ENCODE measurements at regions of chr6 and their contacts with region 1.

Region 1: DNA sequence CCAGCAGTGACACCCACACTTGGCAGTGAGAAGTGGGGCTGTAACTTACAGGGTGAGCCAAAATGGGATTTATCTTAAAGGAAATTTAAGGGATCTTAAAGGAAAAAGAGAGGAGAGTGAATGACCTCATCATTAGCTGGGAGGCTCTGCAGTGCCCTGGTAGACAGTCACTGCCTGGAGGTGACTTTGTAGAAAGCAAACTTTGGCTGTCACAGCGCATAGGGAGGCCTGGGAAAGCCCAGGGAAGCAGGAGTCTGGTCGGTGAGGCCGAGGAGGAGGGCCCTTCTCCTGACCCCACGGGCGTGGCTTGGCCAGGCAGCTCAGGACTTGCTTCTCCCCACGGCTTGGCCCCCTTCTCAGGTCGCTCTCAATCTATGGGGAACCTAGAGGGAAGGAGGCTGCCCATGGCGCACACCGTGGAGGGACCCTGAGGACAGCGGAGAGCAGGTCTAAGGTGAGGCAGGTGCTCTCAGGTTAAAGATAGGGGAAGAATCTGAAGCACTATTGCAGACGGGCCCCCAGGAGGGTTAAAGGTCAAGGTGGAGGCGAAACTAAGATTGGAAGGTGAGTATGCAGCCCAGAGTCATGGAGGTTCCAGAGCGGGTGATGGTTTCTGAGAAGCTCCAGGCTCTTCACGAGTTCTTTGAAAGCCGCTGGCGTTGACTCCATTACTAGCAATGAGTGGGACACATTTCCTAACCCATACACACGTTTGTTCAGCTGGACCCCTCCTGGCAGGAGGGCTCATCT is 15.6 kb upstream of the RIPK1 start:
- DNase-seq: no peak
- ATAC-seq: no peak

Region 2: DNA sequence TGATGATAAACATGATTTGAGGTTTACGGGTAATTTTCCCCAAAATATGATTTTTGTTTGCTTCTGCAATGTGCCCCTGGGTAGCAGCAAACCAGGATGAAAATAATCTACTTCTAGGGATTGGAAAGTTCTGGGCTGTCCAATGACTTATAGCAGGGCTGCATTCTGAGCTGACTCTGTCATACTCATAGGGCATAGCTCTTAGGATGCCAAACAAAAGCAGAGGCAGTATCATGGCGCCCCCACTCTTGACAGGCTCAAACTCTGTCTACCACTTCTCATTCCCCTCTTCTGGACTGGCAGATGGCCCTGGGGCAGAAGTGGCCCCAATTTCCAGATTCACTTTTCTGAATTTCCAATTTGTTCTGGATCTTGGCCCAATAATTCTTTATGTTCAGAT is 221.3 kb before region 1 on chr6:
- intact Hi-C with region 1: no loop called
- DNase-seq: no peak
- ATAC-seq: peak; percentile 30

Region 3: GRCh38 chr6:2999618-3000557 is 52.8 kb before region 1 on chr6 and contains the start of gene NQO2:
- intact Hi-C with region 1: loop called (anchors 2 to 5 kb)
- DNase-seq: peak; percentile 92 to 98
- ATAC-seq: peak; percentile 89
- total RNA-seq, gene NQO2: 10.0 to 12.2 TPM

Region 4: DNA sequence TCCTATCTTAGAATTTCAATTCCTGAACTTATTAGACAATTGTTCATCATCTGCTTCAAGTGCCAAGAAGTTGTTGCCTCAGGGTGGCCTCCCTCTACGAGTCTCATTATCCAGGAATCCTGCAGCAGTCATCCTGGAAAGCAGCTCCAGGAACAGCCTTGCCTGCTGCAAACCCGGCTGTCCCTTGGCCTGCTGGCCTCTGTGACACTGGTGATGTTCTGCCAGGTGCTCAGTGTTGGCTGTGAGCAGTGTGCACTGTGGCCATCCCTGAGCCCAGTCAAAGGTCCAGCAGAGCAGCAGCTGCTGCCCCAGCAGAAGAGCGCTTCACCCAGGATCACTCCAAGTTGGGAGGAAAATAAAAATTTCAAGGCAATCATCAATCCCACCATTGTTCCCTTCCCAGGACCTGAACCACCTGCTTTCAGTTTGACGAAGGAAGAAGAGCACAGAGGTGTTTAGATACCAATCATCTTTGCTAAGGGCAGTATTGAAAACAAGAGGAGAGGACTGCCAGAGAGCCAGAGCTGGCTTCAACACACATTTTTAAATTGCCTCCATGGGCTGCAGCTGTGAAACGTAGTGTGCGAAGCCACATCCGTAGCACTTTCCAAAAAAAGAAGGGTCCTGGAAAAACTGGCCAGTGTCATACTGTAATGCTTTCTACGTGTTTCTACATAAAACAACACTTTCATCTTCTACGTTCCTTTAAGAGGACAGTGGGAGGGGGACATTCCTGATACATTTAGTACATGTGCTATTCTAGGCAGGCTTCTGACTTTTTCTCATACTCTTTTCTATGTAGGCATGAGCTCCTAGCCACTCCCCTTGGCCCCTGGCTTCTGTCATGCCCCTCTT is 789.3 kb after region 1 on chr6:
- intact Hi-C with region 1: no loop called
- DNase-seq: no peak
- ATAC-seq: no peak

Measured in left colon (tissue), 2 donors.